CD14-positive monocyte (primary cell): ENCODE measurements at regions of chr14 and their contacts with region 1.

Region 1: DNA sequence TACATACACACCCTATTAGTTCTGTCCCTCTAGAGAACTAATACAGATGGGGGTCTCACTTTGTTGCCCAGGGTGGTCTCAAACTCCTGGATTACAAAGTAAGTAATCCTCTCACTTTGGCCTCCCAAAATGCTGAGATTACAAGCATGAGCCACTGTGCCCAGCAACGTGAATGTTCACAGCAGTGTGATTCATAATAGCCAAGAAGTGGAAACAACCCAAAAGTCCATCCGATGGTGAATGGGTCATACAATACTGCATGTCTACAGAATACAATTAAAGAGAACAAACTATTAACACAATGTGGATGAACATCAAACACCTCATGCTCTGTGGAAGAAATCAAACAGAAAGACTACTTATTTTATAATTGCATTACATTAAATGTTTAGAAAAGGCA is 57.3 kb upstream of the SYNE2 start:
- DNase-seq: no peak
- H3K4me3 ChIP-seq: no peak overlapping the region
- H3K4me3 Mint-ChIP-seq: no peak overlapping the region
- H3K27ac ChIP-seq: no peak overlapping the region
- H3K27ac Mint-ChIP-seq: no peak overlapping the region
- H3K4me1 ChIP-seq: no peaks in the 10 kb centered on the region
- H3K4me1 Mint-ChIP-seq: peaks cover 2% of the 10 kb centered on the region
- H3K27me3 ChIP-seq: no peaks in the 10 kb centered on the region
- H3K27me3 Mint-ChIP-seq: peaks cover 2 to 14% (median 7%) of the 10 kb centered on the region in 3 donors
- CTCF ChIP-seq: no peak

Region 2: DNA sequence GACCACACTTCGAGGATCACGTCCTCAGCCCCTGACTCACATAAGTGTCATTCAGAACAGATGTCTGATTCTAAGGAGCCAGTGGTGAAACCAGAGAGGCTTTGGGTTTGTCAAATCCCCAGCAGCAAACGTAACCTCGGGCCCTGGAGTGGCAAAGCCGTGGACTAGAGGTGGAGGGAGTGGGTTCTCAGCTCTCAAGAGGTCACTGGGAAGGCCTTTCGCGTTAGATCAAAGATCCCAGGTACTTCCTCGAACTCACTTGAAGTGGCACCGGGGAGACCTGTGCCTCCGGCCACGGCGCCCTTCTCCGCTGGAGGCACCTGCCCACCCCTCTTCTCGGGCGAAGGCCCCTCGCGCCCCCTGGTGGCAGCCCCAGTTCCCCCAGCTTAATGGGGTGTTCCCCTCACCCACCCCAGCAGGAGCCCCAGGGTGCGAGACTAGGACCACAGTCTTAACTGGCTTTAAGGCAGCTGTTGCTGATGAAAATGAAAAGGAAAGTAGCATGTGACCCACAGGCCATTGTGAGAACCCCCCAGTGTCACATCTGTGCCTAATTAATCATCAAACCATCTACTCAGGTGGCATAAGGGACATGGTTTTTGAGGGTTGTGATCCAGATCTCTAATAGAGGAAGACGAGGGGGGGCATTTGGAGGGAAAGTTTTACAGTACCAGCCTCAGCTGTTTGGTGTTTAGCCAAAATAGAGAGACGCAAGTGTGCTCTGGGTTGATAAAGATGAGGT is 499.3 kb after region 1 on chr14:
- intact Hi-C with region 1: loop called (anchors 5 to 10 kb)
- DNase-seq: peak; percentile 6 to 22 (median 6)
- H3K4me3 ChIP-seq: peak overlapping the region in 1 of 3 experiments; percentile 45
- H3K4me3 Mint-ChIP-seq: peak overlapping the region; percentile 61 to 82
- H3K27ac ChIP-seq: no peak overlapping the region
- H3K27ac Mint-ChIP-seq: no peak overlapping the region
- H3K4me1 ChIP-seq: peaks cover 8 to 12% of the 10 kb centered on the region in 2 donors
- H3K4me1 Mint-ChIP-seq: peaks cover 17% of the 10 kb centered on the region
- H3K27me3 ChIP-seq: peaks cover 29 to 41% of the 10 kb centered on the region in 2 donors
- H3K27me3 Mint-ChIP-seq: peaks cover 38 to 51% (median 40%) of the 10 kb centered on the region in 3 donors
- CTCF ChIP-seq: peak; percentile 72

Region 3: GRCh38 chr14:64303471-64303917 is 508.0 kb after region 1 on chr14:
- intact Hi-C with region 1: loop called (anchors 5 to 10 kb)
- DNase-seq: peak; percentile 9 to 25 (median 21)
- H3K4me3 ChIP-seq: no peak overlapping the region
- H3K4me3 Mint-ChIP-seq: no peak overlapping the region
- H3K27ac ChIP-seq: no peak overlapping the region
- H3K27ac Mint-ChIP-seq: no peak overlapping the region
- H3K4me1 ChIP-seq: no peaks in the 10 kb centered on the region
- H3K4me1 Mint-ChIP-seq: no peaks in the 10 kb centered on the region
- H3K27me3 ChIP-seq: no peaks in the 10 kb centered on the region
- H3K27me3 Mint-ChIP-seq: peaks cover 0 to 7% (median 7%) of the 10 kb centered on the region in 3 donors
- CTCF ChIP-seq: peak; percentile 81